ENCODE measurements at regions of chr12 and their contacts with region 1.

Region 1: DNA sequence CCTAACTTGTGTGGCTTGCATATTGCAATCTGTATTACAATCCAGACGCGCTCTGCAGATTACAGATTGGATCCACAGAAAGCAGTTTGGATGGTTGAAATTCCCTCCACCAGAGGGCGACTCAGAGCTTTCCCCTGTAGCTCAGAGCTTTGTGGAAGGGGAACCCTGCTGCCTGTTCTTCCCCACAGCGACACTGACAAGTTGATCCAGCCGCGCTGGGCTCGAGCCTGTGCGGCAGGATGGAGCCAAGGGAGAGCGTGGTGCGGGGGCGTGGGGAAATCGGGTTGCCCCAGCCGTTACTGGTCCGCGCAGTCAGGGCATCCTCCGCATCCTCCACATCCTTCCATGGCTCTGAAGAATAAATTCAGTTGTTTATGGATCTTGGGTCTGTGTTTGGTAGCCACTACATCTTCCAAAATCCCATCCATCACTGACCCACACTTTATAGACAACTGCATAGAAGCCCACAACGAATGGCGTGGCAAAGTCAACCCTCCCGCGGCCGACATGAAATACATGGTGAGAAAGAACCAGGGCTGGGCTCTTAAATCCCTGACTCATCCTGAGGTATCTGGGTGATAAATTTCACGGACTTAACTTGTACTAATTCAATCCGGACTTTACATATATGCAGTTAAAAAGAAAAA is at the start of gene GLIPR1L1:
- DNase-seq: peak; percentile 50 to 93 (median 85)
- H3K4me3 ChIP-seq: peak within 1 kb of the TSS; percentile 29 to 75 (median 53)
- H3K27ac ChIP-seq: peak within 1 kb of the TSS in 28 of 59 donors; percentile 3 to 77 (median 34)
- H3K27me3 ChIP-seq: no peaks in the 10 kb centered on the region
- CTCF ChIP-seq: peak; percentile 71 to 96 (median 92)
- total RNA-seq, gene GLIPR1L1: not detected

Region 2: DNA sequence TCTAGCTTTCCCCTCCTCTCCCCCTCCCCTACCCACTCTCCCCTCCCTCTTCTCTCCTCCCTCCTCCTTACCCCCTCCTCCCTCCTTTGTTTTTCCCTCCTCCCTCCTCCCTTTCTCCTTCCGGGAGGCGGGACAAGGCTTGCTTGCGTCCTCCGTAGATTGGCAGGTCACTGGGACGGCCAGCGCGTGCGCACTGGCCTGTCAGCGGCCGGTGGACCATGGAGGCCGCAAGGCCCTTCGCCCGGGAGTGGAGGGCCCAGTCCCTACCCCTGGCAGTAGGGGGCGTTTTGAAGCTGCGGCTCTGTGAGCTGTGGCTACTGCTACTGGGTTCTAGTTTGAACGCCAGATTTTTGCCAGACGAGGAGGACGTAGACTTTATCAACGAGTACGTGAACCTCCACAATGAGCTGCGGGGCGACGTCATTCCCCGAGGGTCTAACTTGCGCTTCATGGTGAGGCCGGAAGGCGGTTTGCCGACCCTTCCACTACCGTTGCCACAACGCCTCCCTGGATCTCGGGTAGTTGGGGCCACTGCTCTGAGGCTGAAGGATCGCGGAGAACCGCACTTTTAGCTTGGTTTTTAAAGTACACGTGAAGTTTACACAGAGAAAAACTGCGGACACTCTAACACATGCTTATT is 56.5 kb after region 1 on chr12 and contains the start of gene GLIPR1L2:
- intact Hi-C with region 1: loop called (anchors 1 to 2 kb)
- DNase-seq: peak; percentile 92 to 97 (median 95)
- H3K4me3 ChIP-seq: peak within 1 kb of the TSS; percentile 51 to 86 (median 75)
- H3K27ac ChIP-seq: peak within 1 kb of the TSS; percentile 70 to 98 (median 92)
- H3K27me3 ChIP-seq: no peaks in the 10 kb centered on the region
- CTCF ChIP-seq: peak; percentile 67 to 95 (median 84)
- total RNA-seq, gene GLIPR1L2: 0.80 to 10.4 (median 3.9) TPM

Region 3: GRCh38 chr12:75480469-75480949 is 146.0 kb after region 1 on chr12 and contains the start of gene GLIPR1:
- intact Hi-C with region 1: loop called in 1 of 2 experiments (anchors 10 kb)
- DNase-seq: peak in 9 of 10 donors; percentile 37 to 79 (median 71)
- H3K4me3 ChIP-seq: peak within 1 kb of the TSS; percentile 10 to 76 (median 53)
- H3K27ac ChIP-seq: peak within 1 kb of the TSS in 50 of 59 donors; percentile 3 to 83 (median 57)
- H3K27me3 ChIP-seq: no peaks in the 10 kb centered on the region
- CTCF ChIP-seq: peak in 1 of 56 donors; percentile 12
- total RNA-seq, gene GLIPR1: 7.5 to 35.7 (median 20.7) TPM

Region 4: DNA sequence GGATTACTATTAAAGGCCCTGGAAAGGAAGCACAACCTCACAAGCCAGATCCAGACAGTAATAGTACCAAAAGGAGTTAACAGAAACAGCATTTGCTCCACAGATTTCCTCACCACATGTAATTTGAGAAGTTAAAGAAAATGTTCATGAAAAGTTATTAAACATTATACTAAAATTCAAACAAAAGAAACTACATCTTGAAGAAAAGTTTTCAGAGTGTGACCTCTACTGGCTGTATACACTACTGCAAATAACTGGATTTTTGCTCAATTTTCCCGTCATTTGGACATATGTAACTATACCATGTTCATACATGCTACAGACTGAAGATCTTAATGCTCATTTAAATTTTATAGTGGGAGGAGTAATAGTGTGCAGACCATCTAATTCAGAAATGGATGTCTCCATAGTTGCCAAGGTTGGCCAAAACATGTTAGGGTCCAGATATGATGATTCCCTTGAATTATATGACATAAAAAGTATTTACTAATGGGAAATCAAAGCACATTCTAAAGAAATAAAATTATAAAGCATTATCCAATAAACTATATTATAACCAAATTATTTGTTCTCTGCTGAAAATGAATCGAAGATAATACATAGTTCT is 171.3 kb after region 1 on chr12:
- intact Hi-C with region 1: loop called in 1 of 2 experiments (anchors 5 kb)
- DNase-seq: no peak
- H3K4me3 ChIP-seq: no peak overlapping the region
- H3K27ac ChIP-seq: no peak overlapping the region
- H3K27me3 ChIP-seq: no peaks in the 10 kb centered on the region
- CTCF ChIP-seq: peak; percentile 45 to 76 (median 62)